Head of caudate nucleus (tissue), 42 donors: ENCODE measurements at regions of chr2 and their contacts with region 1.

Region 1: DNA sequence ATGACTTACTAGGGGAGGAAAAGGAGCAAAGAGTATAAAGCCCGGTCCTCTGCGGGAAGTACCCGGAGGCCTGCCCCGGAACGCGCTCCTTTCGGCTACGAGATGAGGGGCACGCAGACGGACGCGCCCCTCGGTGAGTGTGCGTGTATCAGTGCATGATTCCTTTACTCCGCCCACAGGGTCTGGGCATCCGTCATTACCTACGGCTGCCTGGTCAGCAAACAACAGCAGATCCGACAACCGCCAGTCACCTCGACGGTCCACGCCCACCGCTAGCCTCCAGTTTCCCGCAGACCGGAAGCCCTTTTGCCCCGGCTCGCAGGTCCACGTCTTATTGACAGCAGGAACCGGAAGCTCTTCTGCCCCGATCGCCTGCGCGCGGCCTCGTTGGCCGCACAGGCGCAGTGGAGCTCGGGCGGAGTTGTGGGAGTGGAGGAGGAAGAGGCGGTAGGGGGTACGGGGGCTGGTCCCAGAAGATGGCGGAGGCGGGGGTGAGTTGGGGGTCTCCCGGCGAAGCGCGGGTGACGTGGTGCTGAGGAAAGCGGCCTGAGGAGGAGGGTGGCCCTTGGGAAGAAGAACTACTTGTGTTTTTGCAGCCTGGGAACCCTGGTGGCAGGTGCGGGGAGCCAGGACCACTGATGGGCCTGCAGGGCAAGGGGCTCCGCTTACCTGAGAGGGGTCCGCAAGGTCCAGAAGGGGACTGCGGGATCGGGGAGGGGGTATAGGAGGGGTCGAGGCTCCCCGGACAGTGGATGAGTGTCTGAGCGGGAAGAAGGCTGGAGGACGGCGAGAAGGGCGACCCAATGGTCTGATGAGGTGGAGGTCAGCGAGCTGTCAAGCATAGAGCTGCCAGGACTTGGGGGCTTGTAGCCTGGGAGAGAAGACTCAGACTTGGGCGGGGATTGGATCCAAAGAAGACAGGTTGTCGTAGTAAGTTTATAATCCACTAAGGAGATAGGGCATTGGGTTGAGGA is at the start of gene INSIG2:
- DNase-seq: peak; percentile 81 to 97 (median 92)

Region 2: GRCh38 chr2:118186110-118186857 is 97.9 kb after region 1 on chr2:
- intact Hi-C with region 1: loop called (anchors 5 kb)
- DNase-seq: peak; percentile 77 to 96 (median 91)